GM12878 (cell line): ENCODE measurements at regions of chr6 and their contacts with region 1.

Region 1: GRCh38 chr6:88641178-88641903 is 322.1 kb downstream of the RNGTT start:
- DNase-seq: peak; percentile 88
- ATAC-seq: peak; percentile 92
- H3K4me3 ChIP-seq: 0 out of 2 replicates have a peak overlapping the region, but pooled peaks have one; percentile 8
- H3K27ac ChIP-seq: peak overlapping the region; percentile 88
- H3K4me1 ChIP-seq: peaks cover 15% of the 10 kb centered on the region
- H3K27me3 ChIP-seq: no peaks in the 10 kb centered on the region
- CTCF ChIP-seq: no peak
- EP300 ChIP-seq: peak; percentile 12 to 58; a peak in 1 of 4 replicates
- POLR2A ChIP-seq: no peak
- RAD21 ChIP-seq: no peak

Region 2: DNA sequence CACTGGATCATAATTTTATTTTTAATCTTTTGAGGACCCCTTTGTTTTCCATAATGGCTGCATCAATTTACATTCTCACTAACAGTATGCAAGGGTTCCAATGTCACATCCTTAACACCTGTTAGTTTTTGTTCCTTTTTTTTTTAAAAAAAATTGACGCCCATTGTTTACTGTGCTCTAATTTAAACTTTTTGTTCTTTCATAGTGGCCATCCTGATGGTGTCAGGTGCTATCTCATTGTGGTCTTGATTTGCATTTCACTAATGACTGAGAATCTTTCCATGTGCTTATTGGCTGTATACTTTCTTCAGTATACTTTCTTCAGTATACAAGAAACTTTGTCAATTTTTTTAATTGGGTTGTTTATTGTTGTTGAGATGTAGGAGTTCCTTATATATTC is 25.0 kb before region 1 on chr6:
- CTCF ChIA-PET with region 1: interaction called, 3 read pairs
- POLR2A ChIA-PET with region 1: no interaction called
- RAD21 ChIA-PET with region 1: interaction called, 16 read pairs
- SMC1A ChIA-PET with region 1: interaction called, 33 read pairs
- in situ Hi-C with region 1: no loop called
- intact Hi-C with region 1: no loop called
- DNase-seq: no peak
- ATAC-seq: peak; percentile 78
- H3K4me3 ChIP-seq: peak overlapping the region; percentile 9; the same call in 1 of the 2 replicates
- H3K27ac ChIP-seq: peak overlapping the region; percentile 62
- H3K4me1 ChIP-seq: peaks cover 15% of the 10 kb centered on the region; the same call in 1 of the 2 replicates
- H3K27me3 ChIP-seq: no peaks in the 10 kb centered on the region
- CTCF ChIP-seq: no peak
- EP300 ChIP-seq: peak; percentile 44 to 90; a peak in 3 of 4 replicates
- POLR2A ChIP-seq: no peak
- RAD21 ChIP-seq: no peak

Region 3: GRCh38 chr6:88629838-88630494 is 11.4 kb before region 1 on chr6:
- CTCF ChIA-PET with region 1: interaction called, 33 read pairs
- POLR2A ChIA-PET with region 1: interaction called, 25 read pairs
- RAD21 ChIA-PET with region 1: interaction called, 58 read pairs
- SMC1A ChIA-PET with region 1: interaction called, 67 read pairs
- in situ Hi-C with region 1: no loop called
- intact Hi-C with region 1: no loop called
- DNase-seq: no peak
- ATAC-seq: peak; percentile 84
- H3K4me3 ChIP-seq: no peak overlapping the region
- H3K27ac ChIP-seq: no peak overlapping the region; the same call in 1 of the 2 replicates
- H3K4me1 ChIP-seq: peaks cover 7% of the 10 kb centered on the region; the same call in 1 of the 2 replicates
- H3K27me3 ChIP-seq: no peaks in the 10 kb centered on the region
- CTCF ChIP-seq: peak; percentile 14 to 28 (median 23); a peak in 3 of 6 replicates
- EP300 ChIP-seq: no peak
- POLR2A ChIP-seq: no peak
- RAD21 ChIP-seq: peak; percentile 39; the same call in 1 of the 2 replicates

Region 4: GRCh38 chr6:88655586-88655985 is 14.2 kb after region 1 on chr6:
- CTCF ChIA-PET with region 1: interaction called, 18 read pairs
- POLR2A ChIA-PET with region 1: interaction called, 15 read pairs
- RAD21 ChIA-PET with region 1: interaction called, 36 read pairs
- SMC1A ChIA-PET with region 1: interaction called, 44 read pairs
- in situ Hi-C with region 1: no loop called
- intact Hi-C with region 1: loop called (anchors 1 kb)
- DNase-seq: no peak
- ATAC-seq: peak; percentile 31; the same call in 1 of the 3 replicates
- H3K4me3 ChIP-seq: no peak overlapping the region
- H3K27ac ChIP-seq: no peak overlapping the region
- H3K4me1 ChIP-seq: peaks cover 4% of the 10 kb centered on the region; the same call in 1 of the 2 replicates
- H3K27me3 ChIP-seq: no peaks in the 10 kb centered on the region
- CTCF ChIP-seq: no peak
- EP300 ChIP-seq: no peak
- POLR2A ChIP-seq: no peak
- RAD21 ChIP-seq: no peak

Region 5: DNA sequence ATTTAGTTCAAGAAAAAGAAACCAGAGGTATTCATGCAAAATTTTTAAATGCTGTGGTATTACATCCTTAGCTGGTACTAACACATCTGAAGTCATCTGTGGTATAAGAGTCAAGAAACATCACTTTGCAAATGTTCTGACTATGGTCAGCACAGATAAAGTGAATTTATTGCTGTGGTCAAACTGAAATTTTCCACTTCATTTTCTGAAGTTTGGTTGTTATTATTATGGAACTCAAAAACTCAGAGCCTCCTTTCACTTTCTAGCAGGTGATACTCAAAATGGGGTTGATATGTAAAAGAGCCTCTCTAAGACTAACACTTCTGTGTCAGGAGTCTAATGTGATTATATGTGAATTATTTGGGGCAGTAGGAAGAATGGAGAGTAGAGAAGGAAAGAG is 64.3 kb after region 1 on chr6:
- CTCF ChIA-PET with region 1: interaction called, 3 read pairs
- POLR2A ChIA-PET with region 1: interaction called, 6 read pairs
- RAD21 ChIA-PET with region 1: interaction called, 24 read pairs
- SMC1A ChIA-PET with region 1: interaction called, 12 read pairs
- in situ Hi-C with region 1: no loop called
- intact Hi-C with region 1: no loop called
- DNase-seq: peak; percentile 81
- ATAC-seq: peak; percentile 96
- H3K4me3 ChIP-seq: no peak overlapping the region
- H3K27ac ChIP-seq: peak overlapping the region; percentile 53; the same call in 1 of the 2 replicates
- H3K4me1 ChIP-seq: peaks cover 22% of the 10 kb centered on the region; the same call in 1 of the 2 replicates
- H3K27me3 ChIP-seq: no peaks in the 10 kb centered on the region
- CTCF ChIP-seq: no peak
- EP300 ChIP-seq: peak; percentile 78 to 85
- POLR2A ChIP-seq: no peak
- RAD21 ChIP-seq: 0 out of 2 replicates have a peak, but pooled peaks have one; percentile 2

Region 6: GRCh38 chr6:88712243-88712936 is 71.0 kb after region 1 on chr6:
- CTCF ChIA-PET with region 1: no interaction called
- POLR2A ChIA-PET with region 1: no interaction called
- RAD21 ChIA-PET with region 1: interaction called, 14 read pairs
- SMC1A ChIA-PET with region 1: interaction called, 12 read pairs
- in situ Hi-C with region 1: no loop called
- intact Hi-C with region 1: no loop called
- DNase-seq: no peak
- ATAC-seq: no peak
- H3K4me3 ChIP-seq: no peak overlapping the region
- H3K27ac ChIP-seq: no peak overlapping the region
- H3K4me1 ChIP-seq: peaks cover 5% of the 10 kb centered on the region; the same call in 1 of the 2 replicates
- H3K27me3 ChIP-seq: no peaks in the 10 kb centered on the region
- CTCF ChIP-seq: no peak
- EP300 ChIP-seq: no peak
- POLR2A ChIP-seq: no peak
- RAD21 ChIP-seq: no peak

Region 7: DNA sequence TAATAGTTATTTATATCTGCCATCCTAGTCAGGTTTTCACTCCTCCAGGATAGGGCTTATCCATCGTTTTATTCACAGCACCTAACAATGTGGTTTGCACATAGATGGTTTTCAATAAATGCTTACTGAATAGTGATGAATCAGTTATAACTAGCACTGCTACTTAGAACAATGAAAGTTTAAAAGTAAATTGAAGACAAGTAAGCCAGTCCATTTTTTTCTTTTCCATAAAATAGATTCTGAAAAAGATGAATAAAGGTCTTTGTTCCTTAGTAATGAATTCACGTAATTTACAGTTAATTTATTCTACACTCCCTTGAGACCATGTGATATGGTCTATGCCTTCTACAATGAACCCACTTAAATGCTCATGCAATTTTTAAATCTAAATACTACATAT is 109.6 kb after region 1 on chr6:
- CTCF ChIA-PET with region 1: no interaction called
- POLR2A ChIA-PET with region 1: interaction called, 4 read pairs
- RAD21 ChIA-PET with region 1: no interaction called
- SMC1A ChIA-PET with region 1: interaction called, 10 read pairs
- in situ Hi-C with region 1: no loop called
- intact Hi-C with region 1: no loop called
- DNase-seq: no peak
- ATAC-seq: no peak
- H3K4me3 ChIP-seq: no peak overlapping the region
- H3K27ac ChIP-seq: no peak overlapping the region
- H3K4me1 ChIP-seq: no peaks in the 10 kb centered on the region
- H3K27me3 ChIP-seq: no peaks in the 10 kb centered on the region
- CTCF ChIP-seq: no peak
- EP300 ChIP-seq: no peak
- POLR2A ChIP-seq: no peak
- RAD21 ChIP-seq: no peak

Region 8: GRCh38 chr6:89464295-89464694 is 823.0 kb after region 1 on chr6:
- CTCF ChIA-PET with region 1: no interaction called
- POLR2A ChIA-PET with region 1: no interaction called
- RAD21 ChIA-PET with region 1: no interaction called
- SMC1A ChIA-PET with region 1: no interaction called
- in situ Hi-C with region 1: no loop called
- intact Hi-C with region 1: no loop called
- DNase-seq: no peak
- ATAC-seq: no peak
- H3K4me3 ChIP-seq: no peak overlapping the region
- H3K27ac ChIP-seq: no peak overlapping the region
- H3K4me1 ChIP-seq: no peaks in the 10 kb centered on the region
- H3K27me3 ChIP-seq: no peaks in the 10 kb centered on the region
- CTCF ChIP-seq: no peak
- EP300 ChIP-seq: no peak
- POLR2A ChIP-seq: no peak
- RAD21 ChIP-seq: no peak